Prostate gland (tissue), 2 donors: ENCODE measurements at regions of chr7 and their contacts with region 1.

Region 1: GRCh38 chr7:107879400-107880035 is 11.5 kb upstream of the DLD start:
- DNase-seq: peak; percentile 39
- H3K4me3 ChIP-seq: no peak overlapping the region
- H3K27ac ChIP-seq: no peak overlapping the region
- H3K4me1 ChIP-seq: no peaks in the 10 kb centered on the region
- H3K27me3 ChIP-seq: no peaks in the 10 kb centered on the region
- CTCF ChIP-seq: peak; percentile 39 to 80 (median 70)
- POLR2A ChIP-seq: no peak

Region 2: GRCh38 chr7:107462740-107463444 is 416.6 kb before region 1 on chr7:
- intact Hi-C with region 1: loop called (anchors 2 kb)
- DNase-seq: peak; percentile 58
- H3K4me3 ChIP-seq: no peak overlapping the region
- H3K27ac ChIP-seq: no peak overlapping the region
- H3K4me1 ChIP-seq: no peaks in the 10 kb centered on the region
- H3K27me3 ChIP-seq: no peaks in the 10 kb centered on the region
- CTCF ChIP-seq: peak; percentile 38 to 88 (median 72)
- POLR2A ChIP-seq: no peak

Region 3: GRCh38 chr7:107486041-107486440 is 393.5 kb before region 1 on chr7:
- intact Hi-C with region 1: no loop called
- DNase-seq: no peak
- H3K4me3 ChIP-seq: no peak overlapping the region
- H3K27ac ChIP-seq: no peak overlapping the region
- H3K4me1 ChIP-seq: no peaks in the 10 kb centered on the region
- H3K27me3 ChIP-seq: no peaks in the 10 kb centered on the region
- CTCF ChIP-seq: no peak
- POLR2A ChIP-seq: no peak

Region 4: DNA sequence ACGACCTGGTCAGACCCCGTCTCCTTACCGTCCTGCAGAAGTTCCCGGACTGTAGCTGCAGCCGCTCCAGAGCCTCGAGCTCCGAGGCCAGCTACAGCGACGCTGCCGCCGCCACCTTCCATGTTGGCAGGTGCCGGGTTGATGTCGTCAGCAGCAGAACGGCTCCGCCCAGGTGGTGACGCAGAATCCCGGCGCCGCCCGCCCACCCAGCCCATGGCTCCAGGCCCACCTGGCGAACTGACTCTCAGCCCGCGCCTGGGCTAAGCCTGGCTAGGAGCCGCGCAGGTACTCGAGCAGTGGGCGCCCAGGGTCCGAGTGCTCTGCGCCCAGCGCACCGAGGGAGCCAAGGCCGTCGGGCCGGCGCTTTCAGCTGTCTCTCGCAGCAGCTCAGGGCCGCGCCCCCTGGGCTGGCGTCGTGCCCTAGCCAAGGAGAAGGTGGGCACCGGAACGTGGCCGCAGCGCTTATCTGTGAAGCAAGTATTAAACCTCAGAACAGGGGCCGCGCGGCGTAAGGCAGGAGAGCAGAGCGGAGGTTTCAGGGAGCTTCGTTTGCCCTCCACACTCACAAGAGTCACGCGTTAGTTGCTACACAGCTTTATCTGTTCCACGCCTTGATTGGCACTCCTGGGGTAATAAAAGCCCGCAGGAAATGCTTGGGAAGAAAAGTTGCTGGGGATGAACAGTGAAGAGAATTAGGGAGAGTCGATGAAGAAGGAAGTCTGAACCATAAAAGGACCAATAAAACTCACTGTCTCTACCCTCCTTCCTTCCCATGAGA is 315.6 kb before region 1 on chr7 and contains the starts of genes COG5 and DUS4L:
- intact Hi-C with region 1: loop called (anchors 10 kb)
- DNase-seq: peak; percentile 84
- H3K4me3 ChIP-seq: peak within 1 kb of the TSS; percentile 90 to 96
- H3K27ac ChIP-seq: peak within 1 kb of the TSS; percentile 96
- H3K4me1 ChIP-seq: peaks cover 7% of the 10 kb centered on the region
- H3K27me3 ChIP-seq: no peaks in the 10 kb centered on the region
- CTCF ChIP-seq: peak in 1 of 4 experiments; percentile 14
- POLR2A ChIP-seq: peak; percentile 72
- total RNA-seq, gene COG5: 35.1 to 86.4 TPM
- total RNA-seq, gene DUS4L: 9.7 to 15.3 TPM

Region 5: DNA sequence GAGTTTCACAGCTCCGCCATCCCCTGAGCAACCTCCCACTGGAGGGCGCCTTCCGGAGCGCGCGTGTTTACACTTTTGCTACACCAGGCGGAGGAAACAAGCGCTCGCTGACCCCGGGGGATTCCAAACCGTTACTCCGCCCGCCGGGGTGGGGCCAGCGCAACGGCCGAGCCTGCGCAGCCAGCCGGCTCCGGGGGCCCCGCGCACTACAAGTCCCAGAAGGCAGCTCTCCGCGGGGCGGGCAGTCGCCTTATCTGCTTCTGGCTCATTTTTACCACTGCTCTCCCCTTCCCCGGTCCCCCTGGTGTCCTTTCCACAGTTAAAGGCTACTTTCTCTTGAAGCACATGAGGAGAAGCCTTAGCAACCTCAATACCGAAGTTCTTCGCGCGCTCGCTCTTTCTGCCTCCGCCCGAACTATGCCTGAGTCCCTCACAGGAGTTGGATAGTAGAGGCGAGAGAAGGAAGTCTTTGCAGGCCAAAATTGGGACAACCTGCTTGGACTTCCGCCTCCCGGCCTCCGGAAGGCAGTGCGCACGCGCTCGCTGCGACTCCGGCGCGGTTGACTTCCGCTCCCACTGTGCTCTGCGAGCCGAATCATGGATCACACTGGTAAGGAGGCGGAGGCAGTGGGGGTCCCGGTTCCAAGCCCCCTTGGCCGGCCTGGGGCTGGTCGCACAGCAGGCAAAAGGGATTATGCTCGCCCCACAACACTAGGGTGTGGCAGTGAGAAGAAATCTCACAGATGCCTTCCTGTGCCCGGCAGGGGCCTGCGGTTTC is 135.8 kb before region 1 on chr7 and contains the start of gene CBLL1:
- intact Hi-C with region 1: loop called (anchors 1 kb)
- DNase-seq: peak; percentile 96
- H3K4me3 ChIP-seq: peak within 1 kb of the TSS; percentile 71 to 73
- H3K27ac ChIP-seq: peak within 1 kb of the TSS; percentile 89 to 95
- H3K4me1 ChIP-seq: no peaks in the 10 kb centered on the region
- H3K27me3 ChIP-seq: no peaks in the 10 kb centered on the region
- CTCF ChIP-seq: peak; percentile 38 to 87 (median 76)
- POLR2A ChIP-seq: peak; percentile 24
- total RNA-seq, gene CBLL1: 35.3 to 49.2 TPM

Region 6: DNA sequence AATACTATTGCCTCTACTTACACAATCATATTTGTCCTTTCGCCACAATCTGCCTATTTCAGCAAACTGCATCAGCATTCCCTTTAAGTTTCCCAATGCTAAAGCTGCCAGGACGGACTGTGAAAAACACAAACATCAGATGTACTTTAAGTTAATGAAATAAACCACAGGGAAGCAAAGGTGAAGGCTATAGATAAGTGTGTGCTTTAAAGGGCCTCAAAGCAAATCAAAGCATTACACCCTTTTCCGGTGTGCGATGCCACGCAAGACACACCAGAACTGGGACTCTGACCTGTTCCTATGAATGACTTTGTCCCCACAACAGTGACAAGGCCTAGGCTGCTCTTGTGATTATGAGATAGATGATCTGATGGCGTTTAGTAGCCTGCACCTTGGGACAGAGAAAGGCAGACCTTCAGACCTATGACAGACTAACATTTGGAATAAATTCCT is 99.8 kb before region 1 on chr7:
- intact Hi-C with region 1: loop called (anchors 10 kb)
- DNase-seq: no peak
- H3K4me3 ChIP-seq: no peak overlapping the region
- H3K27ac ChIP-seq: peak overlapping the region in 1 of 2 donors; percentile 70
- H3K4me1 ChIP-seq: peaks cover under 1% of the 10 kb centered on the region
- H3K27me3 ChIP-seq: no peaks in the 10 kb centered on the region
- CTCF ChIP-seq: no peak
- POLR2A ChIP-seq: no peak

Region 7: GRCh38 chr7:108049962-108050361 is 170.4 kb after region 1 on chr7:
- intact Hi-C with region 1: no loop called
- DNase-seq: no peak
- H3K4me3 ChIP-seq: no peak overlapping the region
- H3K27ac ChIP-seq: no peak overlapping the region
- H3K4me1 ChIP-seq: no peaks in the 10 kb centered on the region
- H3K27me3 ChIP-seq: no peaks in the 10 kb centered on the region
- CTCF ChIP-seq: no peak
- POLR2A ChIP-seq: no peak

Region 8: GRCh38 chr7:108146070-108146837 is 266.7 kb after region 1 on chr7:
- intact Hi-C with region 1: loop called (anchors 5 kb)
- DNase-seq: peak; percentile 53
- H3K4me3 ChIP-seq: no peak overlapping the region
- H3K27ac ChIP-seq: no peak overlapping the region
- H3K4me1 ChIP-seq: no peaks in the 10 kb centered on the region
- H3K27me3 ChIP-seq: no peaks in the 10 kb centered on the region
- CTCF ChIP-seq: peak; percentile 50 to 87 (median 76)
- POLR2A ChIP-seq: no peak